ENCODE measurements at regions of chr2 and their contacts with region 1.

Region 1: DNA sequence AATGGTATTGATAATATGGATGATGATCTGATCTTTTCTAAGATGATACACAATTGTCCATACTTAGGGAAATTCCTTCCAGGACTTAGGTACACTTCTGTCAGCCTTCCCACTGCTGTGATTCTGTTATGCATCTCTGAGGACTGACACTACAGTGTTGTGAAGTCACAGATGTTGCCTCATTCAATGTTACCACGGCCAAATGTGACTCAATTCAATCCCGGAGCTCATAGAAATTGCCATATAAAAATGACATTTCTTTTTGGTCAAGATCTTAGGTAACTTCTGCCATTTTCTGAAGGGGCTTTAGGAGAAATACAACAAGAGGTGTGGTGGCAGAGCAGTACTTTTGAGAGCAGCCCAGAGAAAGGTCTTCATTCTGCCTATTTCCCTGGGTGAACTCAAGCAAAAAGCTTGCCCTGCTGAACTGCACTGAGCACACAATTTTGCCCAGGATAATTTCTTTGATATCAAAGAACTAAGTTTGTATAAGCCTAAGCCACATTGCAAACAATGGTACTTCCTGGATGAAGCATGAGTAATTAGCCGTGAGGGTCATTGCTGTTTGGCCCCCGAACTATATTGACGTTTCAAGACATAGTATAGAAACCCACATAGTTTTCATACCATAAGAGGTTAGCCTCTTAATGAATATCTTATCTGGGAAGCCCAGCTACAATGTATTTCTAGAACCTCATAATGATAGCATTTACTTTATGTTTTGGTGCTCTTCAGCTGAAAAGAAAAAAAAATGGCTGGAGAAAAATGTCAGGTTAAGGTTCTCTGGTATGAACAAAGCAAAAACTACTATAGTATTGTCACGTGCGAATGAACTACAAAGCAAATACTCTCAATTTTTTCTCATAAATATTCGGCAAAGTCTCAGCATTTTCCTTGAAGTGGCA is 437.4 kb downstream of the MEIS1 start:
- DNase-seq: peak; percentile 41
- H3K4me3 ChIP-seq: no peak overlapping the region
- H3K27ac ChIP-seq: peak overlapping the region; percentile 82
- H3K27me3 ChIP-seq: no peaks in the 10 kb centered on the region
- CTCF ChIP-seq: no peak

Region 2: DNA sequence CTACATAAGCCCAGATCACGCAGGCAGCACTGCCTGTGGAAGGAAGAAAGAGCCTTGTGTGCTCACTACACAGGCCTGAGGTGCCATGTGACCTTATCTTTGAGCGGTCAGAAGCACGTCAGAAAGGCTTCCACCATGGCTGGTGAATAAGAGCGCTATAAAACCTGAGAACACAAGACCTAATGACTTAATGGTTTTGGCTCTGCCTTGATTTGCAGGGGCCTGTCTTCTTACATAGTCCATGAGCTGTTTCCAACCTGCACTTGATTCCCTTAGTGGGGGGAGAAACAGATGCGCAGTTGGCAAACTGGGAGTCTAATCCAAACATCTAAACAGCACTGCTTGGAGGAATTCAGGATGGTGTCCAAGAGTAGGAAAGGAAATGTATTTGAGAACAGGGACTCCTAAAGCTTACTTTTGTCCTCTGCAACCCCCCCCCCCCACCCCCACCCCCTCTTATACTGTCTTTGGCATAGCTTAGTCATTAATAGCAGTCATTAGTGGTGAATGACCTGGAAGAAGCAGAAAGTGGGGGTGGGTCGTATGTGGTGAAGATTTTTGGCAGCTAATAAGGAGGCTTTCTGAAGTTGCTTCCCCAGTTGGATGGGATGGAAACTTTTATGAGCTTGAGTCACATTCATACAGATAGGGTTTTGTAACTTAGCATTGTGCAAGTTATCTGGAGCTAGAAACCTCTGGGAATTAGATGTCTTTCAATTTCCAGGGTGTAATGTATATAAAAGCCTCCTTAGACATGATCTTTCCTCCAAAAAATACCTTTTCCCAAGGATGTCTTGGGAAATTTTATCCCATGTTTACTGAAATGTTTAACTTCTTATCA is 16.7 kb after region 1 on chr2:
- CTCF ChIA-PET with region 1: interaction called, 3 read pairs
- POLR2A ChIA-PET with region 1: interaction called, 17 read pairs
- DNase-seq: peak; percentile 97
- H3K4me3 ChIP-seq: no peak overlapping the region
- H3K27ac ChIP-seq: peak overlapping the region; percentile 98
- H3K27me3 ChIP-seq: no peaks in the 10 kb centered on the region
- CTCF ChIP-seq: no peak